Transverse colon (tissue), 4 donors: ENCODE measurements at regions of chr5 and their contacts with region 1.

Region 1: DNA sequence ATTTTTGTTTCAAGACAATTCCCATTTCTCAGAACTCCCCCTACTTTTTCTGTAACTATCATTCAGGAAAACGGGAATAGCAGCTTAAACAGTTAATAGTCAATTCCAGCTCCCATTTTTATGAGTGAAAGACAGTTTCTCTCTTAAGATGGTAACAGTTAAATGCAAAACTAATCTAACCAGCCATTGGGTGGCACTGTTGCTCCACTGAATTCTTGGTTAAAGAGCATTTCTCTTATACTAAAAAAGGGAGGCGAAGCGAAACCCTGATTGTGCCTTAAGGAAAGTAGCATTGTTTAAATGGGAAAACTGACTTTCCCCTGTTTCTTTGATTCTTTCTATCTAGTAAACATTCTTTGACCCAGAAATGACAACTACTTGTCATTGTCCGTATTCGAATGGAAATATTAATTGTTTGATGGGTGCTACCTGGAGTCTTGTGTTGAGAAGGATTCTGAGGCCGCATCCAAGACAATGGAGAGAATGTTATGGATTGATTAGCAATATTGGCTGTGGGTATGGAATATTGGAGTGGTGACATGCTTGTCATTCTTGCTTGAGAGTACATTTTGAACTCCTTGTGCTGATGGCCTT is 507.8 kb downstream of the MAT2B start:
- DNase-seq: peak; percentile 57
- H3K4me3 ChIP-seq: no peak overlapping the region
- H3K27ac ChIP-seq: no peak overlapping the region
- H3K4me1 ChIP-seq: no peaks in the 10 kb centered on the region
- H3K27me3 ChIP-seq: no peaks in the 10 kb centered on the region
- CTCF ChIP-seq: peak; percentile 57 to 71 (median 64)
- EP300 ChIP-seq: no peak
- POLR2A ChIP-seq: no peak

Region 2: DNA sequence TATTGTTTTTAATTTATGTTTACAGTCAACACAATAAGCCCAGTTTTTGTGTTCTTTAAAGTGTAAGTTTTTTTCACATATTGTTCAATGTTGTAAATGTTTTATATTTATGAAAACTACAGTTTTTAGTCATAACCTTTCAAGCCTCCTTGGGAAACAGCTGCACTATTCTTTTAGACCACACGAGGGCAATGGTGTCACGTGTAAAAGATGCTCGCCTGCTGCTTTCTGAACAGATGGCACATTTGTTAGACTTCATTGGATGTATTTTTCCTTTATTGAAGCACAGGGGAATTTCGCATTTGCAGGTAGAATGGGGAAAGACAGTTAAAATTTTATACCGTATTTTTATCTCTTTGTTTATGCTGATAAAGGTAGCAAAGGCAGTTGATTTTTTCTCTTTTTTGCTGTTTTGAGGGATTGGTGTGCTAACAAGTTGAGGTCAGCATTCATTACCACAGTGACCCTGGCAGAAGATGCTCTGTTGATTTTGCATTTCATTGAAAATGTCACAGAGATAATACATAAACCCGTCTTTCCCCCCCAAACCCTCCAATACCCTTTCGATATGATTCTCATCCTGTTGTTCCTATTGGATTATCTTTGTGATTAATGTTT is 448.7 kb before region 1 on chr5:
- in situ Hi-C with region 1: loop called in 3 of 4 experiments (anchors 25 kb)
- intact Hi-C with region 1: no loop called
- DNase-seq: peak; percentile 62
- H3K4me3 ChIP-seq: no peak overlapping the region
- H3K27ac ChIP-seq: no peak overlapping the region
- H3K4me1 ChIP-seq: peaks cover 0 to 21% (median 12%) of the 10 kb centered on the region in 4 donors
- H3K27me3 ChIP-seq: peaks cover 53% of the 10 kb centered on the region
- CTCF ChIP-seq: peak; percentile 82 to 92 (median 88)
- EP300 ChIP-seq: no peak
- POLR2A ChIP-seq: no peak

Region 3: DNA sequence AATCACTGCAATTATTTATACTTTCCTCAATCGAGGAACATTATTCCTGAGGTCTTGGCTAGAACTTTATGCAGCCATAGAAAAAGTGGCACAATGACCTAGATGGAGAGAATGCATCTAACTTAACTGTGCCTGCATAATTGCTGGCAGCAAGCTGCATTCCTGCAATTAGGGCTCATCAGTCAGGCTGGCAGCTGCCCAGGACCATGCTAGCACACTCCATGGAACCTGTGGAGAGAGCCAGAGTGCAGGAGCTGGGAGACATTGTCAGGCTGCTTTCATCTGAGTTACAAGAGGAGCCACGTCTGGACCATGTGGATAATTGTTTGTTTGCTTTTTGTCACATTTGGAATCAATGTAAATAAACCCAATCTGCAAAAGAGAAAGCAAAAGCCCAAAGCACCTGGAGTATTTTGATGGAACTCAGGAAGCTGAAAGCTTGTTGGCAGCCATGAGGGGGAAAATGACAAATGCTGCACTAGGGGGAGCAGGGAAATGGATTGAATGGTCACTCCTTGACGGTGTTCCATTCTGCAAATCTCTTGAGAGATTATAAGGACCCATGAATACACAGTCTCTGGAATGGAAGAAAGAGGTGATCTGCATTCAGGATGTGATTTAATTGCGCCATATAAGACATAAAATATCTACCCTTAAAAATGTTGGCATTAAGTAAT is 332.1 kb after region 1 on chr5:
- in situ Hi-C with region 1: no loop called
- intact Hi-C with region 1: no loop called
- DNase-seq: no peak
- H3K4me3 ChIP-seq: no peak overlapping the region
- H3K27ac ChIP-seq: no peak overlapping the region
- H3K4me1 ChIP-seq: no peaks in the 10 kb centered on the region
- H3K27me3 ChIP-seq: no peaks in the 10 kb centered on the region
- CTCF ChIP-seq: no peak
- EP300 ChIP-seq: no peak
- POLR2A ChIP-seq: no peak

Region 4: GRCh38 chr5:164475339-164475977 is 462.3 kb after region 1 on chr5:
- in situ Hi-C with region 1: loop called in 1 of 4 experiments (anchors 25 kb)
- intact Hi-C with region 1: no loop called
- DNase-seq: no peak
- H3K4me3 ChIP-seq: no peak overlapping the region
- H3K27ac ChIP-seq: no peak overlapping the region
- H3K4me1 ChIP-seq: no peaks in the 10 kb centered on the region
- H3K27me3 ChIP-seq: no peaks in the 10 kb centered on the region
- CTCF ChIP-seq: peak in 4 of 5 experiments; percentile 17 to 31 (median 26)
- EP300 ChIP-seq: no peak
- POLR2A ChIP-seq: no peak

Region 5: DNA sequence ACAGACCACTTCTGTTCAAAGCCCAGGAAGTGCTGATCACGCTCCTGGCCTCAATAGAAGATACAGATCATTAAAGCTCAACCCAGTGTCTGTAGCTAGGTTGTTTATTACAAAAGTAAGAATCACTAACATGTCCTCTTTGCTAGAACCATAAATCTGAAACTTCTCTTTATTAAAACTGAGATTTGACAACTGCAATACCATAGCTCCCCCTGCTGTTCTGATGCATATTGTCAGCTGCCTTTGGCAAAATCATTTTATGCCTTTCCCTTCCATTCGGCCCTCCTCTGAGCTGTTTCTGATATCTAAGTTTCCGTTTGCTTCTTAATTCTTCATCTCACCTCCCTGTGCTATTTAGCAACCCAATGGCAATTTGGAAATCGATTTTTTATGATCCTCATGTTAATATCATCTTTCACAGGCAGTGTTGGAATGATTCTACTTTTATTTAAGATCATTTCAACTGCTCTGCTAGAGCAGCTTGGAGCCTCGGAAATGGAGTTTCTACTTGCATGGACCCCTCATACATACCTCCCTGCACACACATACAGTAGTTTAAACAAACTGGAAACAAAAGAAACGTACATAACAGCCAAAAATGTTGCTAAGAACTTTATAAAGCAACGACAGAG is 491.1 kb after region 1 on chr5:
- in situ Hi-C with region 1: loop called in 3 of 4 experiments (anchors 25 kb)
- intact Hi-C with region 1: no loop called
- DNase-seq: peak; percentile 15
- H3K4me3 ChIP-seq: no peak overlapping the region
- H3K27ac ChIP-seq: no peak overlapping the region
- H3K4me1 ChIP-seq: no peaks in the 10 kb centered on the region
- H3K27me3 ChIP-seq: no peaks in the 10 kb centered on the region
- CTCF ChIP-seq: peak; percentile 70 to 78 (median 77)
- EP300 ChIP-seq: no peak
- POLR2A ChIP-seq: no peak

Region 6: DNA sequence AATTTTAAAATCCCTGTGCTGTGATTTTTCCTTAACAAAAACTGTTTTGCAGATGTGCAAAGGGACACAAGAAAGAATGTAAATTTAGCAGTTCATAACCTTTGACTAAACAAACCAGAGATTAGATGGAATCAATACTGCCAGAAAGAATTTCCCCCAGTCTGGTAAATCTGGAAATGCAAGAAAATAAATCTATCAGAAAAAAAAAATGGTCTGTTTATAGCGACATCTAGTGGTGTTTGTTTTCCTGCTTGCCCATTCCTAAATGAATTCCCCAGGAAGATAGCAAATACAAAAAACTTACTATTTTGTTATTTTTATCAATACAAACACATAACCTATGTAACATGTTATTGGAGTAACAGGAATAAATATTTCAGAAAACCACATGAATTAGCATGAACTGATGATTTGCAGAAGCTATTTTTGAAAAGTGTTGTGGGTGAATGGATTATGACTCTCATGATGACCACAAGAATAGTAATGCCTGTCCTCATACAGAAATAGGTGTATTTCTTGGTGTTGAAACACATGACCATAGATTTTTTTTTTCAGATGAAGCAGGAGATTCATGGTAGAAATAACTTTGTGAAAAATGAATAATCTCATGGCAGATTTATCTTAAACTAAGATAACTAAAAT is 1196.0 kb after region 1 on chr5:
- in situ Hi-C with region 1: loop called in 1 of 4 experiments (anchors 25 kb)
- intact Hi-C with region 1: loop called (anchors 10 kb)
- DNase-seq: no peak
- H3K4me3 ChIP-seq: no peak overlapping the region
- H3K27ac ChIP-seq: no peak overlapping the region
- H3K4me1 ChIP-seq: no peaks in the 10 kb centered on the region
- H3K27me3 ChIP-seq: no peaks in the 10 kb centered on the region
- CTCF ChIP-seq: peak; percentile 36 to 71 (median 59)
- EP300 ChIP-seq: no peak
- POLR2A ChIP-seq: no peak